WTC11 (cell line): ENCODE measurements at regions of chr4 and their contacts with region 1.

Region 1: DNA sequence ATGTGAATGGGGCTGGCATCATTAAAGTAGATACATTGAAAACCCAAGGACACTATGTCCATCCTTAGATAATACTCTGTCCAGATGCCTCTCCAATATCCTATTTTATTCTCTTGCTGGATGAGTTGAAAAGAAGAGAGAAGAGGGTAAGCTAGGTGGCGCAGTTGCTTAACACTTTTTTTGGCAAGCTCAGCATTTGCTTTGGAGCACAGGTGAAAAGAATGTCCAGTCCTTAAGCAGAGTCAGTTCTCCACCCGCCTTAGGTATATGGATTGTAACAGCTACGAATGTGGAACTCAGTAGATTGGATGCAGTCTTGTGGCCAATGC is 208.4 kb downstream of the NWD2 start:
- DNase-seq: peak; percentile 45
- ATAC-seq: peak; percentile 72
- H3K4me3 Mint-ChIP-seq: peak overlapping the region; percentile 73
- H3K27ac Mint-ChIP-seq: no peak overlapping the region
- H3K4me1 Mint-ChIP-seq: peaks cover 15% of the 10 kb centered on the region
- H3K27me3 Mint-ChIP-seq: peaks cover 50% of the 10 kb centered on the region
- CTCF ChIP-seq: peak; percentile 36; the same call in 1 of the 2 replicates

Region 2: DNA sequence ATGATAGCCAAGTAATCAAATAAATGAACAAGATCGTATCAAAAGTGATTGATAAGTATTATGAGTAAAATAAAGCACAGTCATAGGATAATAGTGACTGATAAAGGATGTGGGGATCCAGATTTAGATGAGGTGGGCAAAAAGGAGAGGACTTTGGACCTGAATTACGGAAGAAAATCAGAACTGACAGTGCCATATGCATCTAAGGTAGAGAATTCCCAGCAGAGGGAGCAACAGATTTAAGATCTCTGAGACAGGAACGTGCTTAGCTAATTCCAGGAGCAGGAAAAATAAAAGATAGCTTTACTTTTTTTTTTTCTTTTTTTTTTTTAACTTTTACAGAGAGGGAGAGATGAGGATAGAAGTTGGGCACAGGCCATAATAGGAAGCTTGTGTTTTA is 18.4 kb before region 1 on chr4:
- CTCF ChIA-PET with region 1: interaction called, 10 read pairs
- POLR2A ChIA-PET with region 1: no interaction called
- DNase-seq: no peak
- ATAC-seq: peak; percentile 30; the same call in 1 of the 2 replicates
- H3K4me3 Mint-ChIP-seq: no peak overlapping the region
- H3K27ac Mint-ChIP-seq: no peak overlapping the region
- H3K4me1 Mint-ChIP-seq: 0 out of 2 replicates have a peak, but pooled peaks cover 3% of the 10 kb centered on the region
- H3K27me3 Mint-ChIP-seq: no peaks in the 10 kb centered on the region
- CTCF ChIP-seq: no peak

Region 3: DNA sequence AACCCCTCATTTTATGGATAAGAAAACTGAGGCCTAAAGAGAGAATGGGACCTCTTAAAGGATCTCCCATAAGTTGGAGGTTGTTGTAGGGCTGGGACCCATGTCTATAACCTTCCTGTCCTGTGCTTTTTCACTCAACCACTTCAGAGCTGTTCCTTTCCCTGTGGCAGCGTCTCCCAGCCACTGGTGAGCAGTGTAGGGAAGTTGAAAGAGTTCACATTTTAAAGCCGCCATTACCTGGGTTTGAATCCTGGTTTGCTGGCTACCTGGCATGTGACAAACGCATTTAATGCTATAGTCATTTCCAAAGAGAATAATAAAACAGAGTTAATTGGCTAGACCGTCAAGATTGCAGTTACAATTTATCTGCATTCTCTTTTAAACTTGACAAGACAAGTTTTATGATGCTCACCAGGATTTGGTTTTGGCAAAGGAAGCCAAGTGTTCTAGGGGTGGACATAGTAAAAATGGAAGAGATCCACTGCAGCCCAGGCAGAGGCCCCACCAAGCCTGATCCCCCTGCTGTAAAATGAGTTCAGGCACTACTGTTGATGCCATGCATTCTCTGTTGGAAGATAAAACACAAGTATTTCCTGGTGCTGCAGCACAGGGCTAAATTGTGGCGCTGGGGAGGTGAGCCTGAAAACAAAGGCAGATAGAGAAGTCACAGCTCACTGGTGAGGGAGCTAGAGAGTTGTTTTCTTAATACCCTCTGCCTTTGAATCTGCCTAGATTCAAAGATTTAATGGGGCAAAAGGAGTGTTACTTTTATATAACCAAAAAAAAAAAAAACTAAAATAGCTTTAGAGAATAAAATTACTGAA is 10.3 kb after region 1 on chr4:
- CTCF ChIA-PET with region 1: interaction called, 19 read pairs
- POLR2A ChIA-PET with region 1: no interaction called
- DNase-seq: peak; percentile 16
- ATAC-seq: peak; percentile 91
- H3K4me3 Mint-ChIP-seq: no peak overlapping the region
- H3K27ac Mint-ChIP-seq: no peak overlapping the region
- H3K4me1 Mint-ChIP-seq: peaks cover 10% of the 10 kb centered on the region
- H3K27me3 Mint-ChIP-seq: no peaks in the 10 kb centered on the region
- CTCF ChIP-seq: no peak

Region 4: DNA sequence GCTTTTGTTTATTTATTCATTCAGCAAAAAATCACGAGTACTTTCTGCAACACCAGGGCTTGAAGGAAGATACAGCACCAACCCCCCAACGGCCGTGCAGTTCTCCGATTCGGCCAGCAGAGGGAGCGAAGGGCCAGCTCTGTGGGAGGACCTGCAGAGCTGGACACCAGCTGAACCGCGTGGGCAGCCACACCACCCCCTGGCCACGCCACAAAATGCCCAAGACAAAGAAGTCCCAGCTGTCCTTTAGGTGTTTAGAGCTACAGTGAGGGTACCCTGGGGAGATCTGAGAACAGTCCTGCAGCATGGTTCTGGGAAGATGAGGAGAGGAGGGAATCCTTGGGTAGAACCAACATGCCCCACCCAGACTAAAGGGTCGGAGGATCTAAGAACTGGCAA is 150.2 kb after region 1 on chr4:
- CTCF ChIA-PET with region 1: interaction called, 13 read pairs
- POLR2A ChIA-PET with region 1: no interaction called
- DNase-seq: peak; percentile 91
- ATAC-seq: peak; percentile 84
- H3K4me3 Mint-ChIP-seq: no peak overlapping the region
- H3K27ac Mint-ChIP-seq: no peak overlapping the region
- H3K4me1 Mint-ChIP-seq: peaks cover 32% of the 10 kb centered on the region
- H3K27me3 Mint-ChIP-seq: peaks cover 3% of the 10 kb centered on the region; the same call in 1 of the 2 replicates
- CTCF ChIP-seq: peak; percentile 97

Region 5: DNA sequence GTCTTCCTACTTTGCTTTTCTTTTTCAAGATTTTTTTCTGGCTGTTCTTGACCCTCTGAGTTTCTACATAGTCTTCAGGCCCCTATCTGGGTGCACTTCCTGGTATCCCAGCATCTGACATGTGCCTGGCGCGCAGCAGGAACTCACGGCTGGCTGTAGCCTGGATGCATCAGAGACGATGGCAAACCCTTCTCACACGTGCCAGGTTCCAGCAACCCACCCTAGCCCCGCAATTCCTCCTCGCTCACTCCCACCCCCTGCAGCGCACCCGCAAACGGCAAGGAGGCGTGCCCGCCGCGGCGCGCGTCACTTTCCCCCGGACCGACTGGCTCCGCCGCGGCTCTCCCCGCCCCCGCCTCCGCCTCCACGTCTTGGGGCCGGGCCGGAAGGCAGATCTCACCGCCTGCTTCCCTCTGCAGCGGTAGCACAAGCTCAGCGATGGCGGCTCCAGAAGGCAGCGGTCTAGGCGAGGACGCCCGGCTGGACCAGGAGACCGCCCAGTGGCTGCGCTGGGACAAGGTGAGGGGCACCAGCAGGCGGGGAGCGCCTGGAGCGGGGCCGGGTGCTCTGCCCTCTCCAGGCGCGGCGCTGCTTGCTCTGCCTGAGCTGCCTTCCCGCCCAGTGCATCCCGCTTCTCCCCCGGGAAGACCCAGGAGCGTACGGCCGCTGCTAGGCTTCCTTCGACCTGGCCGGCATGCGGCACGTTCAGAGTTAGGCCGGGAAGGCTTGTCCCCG is 373.5 kb after region 1 on chr4 and contains the start of gene PGM2:
- CTCF ChIA-PET with region 1: interaction called, 10 read pairs
- POLR2A ChIA-PET with region 1: no interaction called
- DNase-seq: peak; percentile 91
- ATAC-seq: peak; percentile 94
- H3K4me3 Mint-ChIP-seq: peak within 1 kb of the TSS; percentile 78
- H3K27ac Mint-ChIP-seq: peak within 1 kb of the TSS; percentile 67
- H3K4me1 Mint-ChIP-seq: peaks cover 20% of the 10 kb centered on the region
- H3K27me3 Mint-ChIP-seq: peaks cover 13% of the 10 kb centered on the region
- CTCF ChIP-seq: no peak
- total RNA-seq, gene PGM2: 28.5 to 31.4 TPM (median 30.1 TPM) in 3 replicates